CD4-positive, alpha-beta memory T cell (primary cell): ENCODE measurements at regions of chr18 and their contacts with region 1.

Region 1: GRCh38 chr18:46148810-46149209 is 44.6 kb downstream of the HAUS1 start:
- DNase-seq: peak; percentile 50 to 64 (median 55)
- H3K4me3 ChIP-seq: no peak overlapping the region
- H3K4me3 Mint-ChIP-seq: peak overlapping the region in 4 of 8 donors; percentile 5 to 53 (median 17)
- H3K27ac ChIP-seq: no peak overlapping the region
- H3K27ac Mint-ChIP-seq: peak overlapping the region in 6 of 7 donors; percentile 21 to 86 (median 68)
- H3K4me1 ChIP-seq: peaks cover 47% of the 10 kb centered on the region
- H3K4me1 Mint-ChIP-seq: peaks cover 21 to 44% (median 34%) of the 10 kb centered on the region in 4 donors
- H3K27me3 ChIP-seq: no peaks in the 10 kb centered on the region
- H3K27me3 Mint-ChIP-seq: no peaks in the 10 kb centered on the region

Region 2: DNA sequence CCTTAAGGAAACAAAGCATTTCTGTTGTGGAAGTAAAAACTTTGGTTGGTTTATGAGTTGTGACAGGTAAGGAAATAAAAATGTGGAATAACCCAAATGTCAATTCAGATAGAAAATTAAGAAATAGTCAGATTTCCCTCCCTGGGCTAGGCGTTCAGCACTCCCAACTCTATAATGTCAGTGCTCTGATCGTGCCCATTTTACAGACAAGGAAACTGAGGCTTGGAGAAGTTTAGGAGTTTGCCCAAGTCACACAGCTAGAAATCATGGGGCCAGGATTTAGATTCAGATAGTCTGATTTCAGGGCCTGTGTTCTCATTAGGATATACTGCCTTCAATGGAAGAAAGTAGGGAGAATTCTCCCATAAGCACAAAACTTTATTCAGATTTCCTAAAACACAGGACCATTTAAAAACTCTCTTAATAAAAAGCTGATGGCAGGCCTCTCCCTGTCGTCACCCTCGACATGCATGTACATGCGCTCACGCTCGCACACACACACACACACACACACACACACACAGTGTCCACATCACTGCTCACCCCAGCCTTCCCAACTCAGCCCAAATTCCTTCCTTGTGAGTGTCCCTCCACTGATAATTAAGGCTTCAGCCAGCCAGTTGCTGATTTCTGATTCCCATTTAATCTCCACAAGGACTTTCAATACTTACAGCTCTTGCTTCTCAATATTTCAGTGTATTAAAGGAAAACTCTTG is 582.6 kb before region 1 on chr18:
- CTCF ChIA-PET with region 1: no interaction called
- POLR2A ChIA-PET with region 1: no interaction called
- intact Hi-C with region 1: no loop called
- DNase-seq: no peak
- H3K4me3 ChIP-seq: no peak overlapping the region
- H3K4me3 Mint-ChIP-seq: no peak overlapping the region
- H3K27ac ChIP-seq: no peak overlapping the region
- H3K27ac Mint-ChIP-seq: no peak overlapping the region
- H3K4me1 ChIP-seq: no peaks in the 10 kb centered on the region
- H3K4me1 Mint-ChIP-seq: no peaks in the 10 kb centered on the region
- H3K27me3 ChIP-seq: no peaks in the 10 kb centered on the region
- H3K27me3 Mint-ChIP-seq: peaks cover 0 to 3% of the 10 kb centered on the region in 2 donors

Region 3: GRCh38 chr18:46097801-46098615 is 50.8 kb before region 1 on chr18 and contains the start of gene ATP5F1A:
- CTCF ChIA-PET with region 1: no interaction called
- POLR2A ChIA-PET with region 1: no interaction called
- intact Hi-C with region 1: no loop called
- DNase-seq: peak; percentile 82 to 90 (median 86)
- H3K4me3 ChIP-seq: peak within 1 kb of the TSS; percentile 39 to 95
- H3K4me3 Mint-ChIP-seq: peak within 1 kb of the TSS; percentile 92 to 99 (median 98)
- H3K27ac ChIP-seq: peak within 1 kb of the TSS; percentile 93
- H3K27ac Mint-ChIP-seq: peak within 1 kb of the TSS; percentile 94 to 99 (median 98)
- H3K4me1 ChIP-seq: peaks cover 47% of the 10 kb centered on the region
- H3K4me1 Mint-ChIP-seq: peaks cover 14 to 40% (median 25%) of the 10 kb centered on the region in 4 donors
- H3K27me3 ChIP-seq: no peaks in the 10 kb centered on the region
- H3K27me3 Mint-ChIP-seq: no peaks in the 10 kb centered on the region
- total RNA-seq, gene ATP5F1A: 212 to 225 TPM

Region 4: DNA sequence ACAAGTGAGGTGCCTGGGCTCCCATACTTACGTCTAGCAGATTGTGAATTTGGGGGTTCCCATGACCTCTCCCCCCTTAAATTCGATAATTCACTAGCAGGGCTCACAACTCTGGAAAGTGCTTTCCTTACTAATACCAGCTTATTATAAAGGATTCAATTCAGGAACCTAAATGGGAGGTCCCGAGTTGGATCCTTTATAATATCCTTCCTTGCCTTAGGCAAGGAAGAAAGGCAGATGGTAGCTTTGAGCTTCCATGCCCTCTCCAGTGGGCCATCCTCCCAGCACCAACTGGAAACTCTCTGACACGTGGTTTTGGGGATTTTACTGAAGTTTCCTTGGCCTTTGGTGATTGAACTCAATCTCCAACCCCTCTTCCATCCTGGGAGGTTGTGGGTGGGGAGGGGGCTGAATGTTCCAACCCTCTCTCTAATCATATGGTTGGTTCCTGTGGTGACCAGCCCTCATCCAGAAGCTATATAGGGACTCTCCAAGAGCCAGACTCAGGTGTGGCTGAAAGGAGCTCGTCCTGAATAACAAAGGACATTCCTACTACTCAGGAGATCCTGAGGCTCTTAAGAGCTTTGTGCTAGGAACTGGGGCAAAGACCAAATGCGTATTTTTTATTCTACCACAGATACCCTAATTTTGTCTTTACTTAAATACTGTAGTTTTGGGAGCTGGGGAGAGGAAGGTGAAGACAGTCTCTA is 17.6 kb after region 1 on chr18:
- CTCF ChIA-PET with region 1: interaction called, 68 read pairs
- POLR2A ChIA-PET with region 1: interaction called, 3 read pairs
- intact Hi-C with region 1: no loop called
- DNase-seq: no peak
- H3K4me3 ChIP-seq: no peak overlapping the region
- H3K4me3 Mint-ChIP-seq: peak overlapping the region in 1 of 8 donors; percentile 2
- H3K27ac ChIP-seq: no peak overlapping the region
- H3K27ac Mint-ChIP-seq: peak overlapping the region in 3 of 7 donors; percentile 26 to 59 (median 37)
- H3K4me1 ChIP-seq: peaks cover 6% of the 10 kb centered on the region
- H3K4me1 Mint-ChIP-seq: peaks cover 11 to 37% (median 20%) of the 10 kb centered on the region in 4 donors
- H3K27me3 ChIP-seq: no peaks in the 10 kb centered on the region
- H3K27me3 Mint-ChIP-seq: no peaks in the 10 kb centered on the region

Region 5: DNA sequence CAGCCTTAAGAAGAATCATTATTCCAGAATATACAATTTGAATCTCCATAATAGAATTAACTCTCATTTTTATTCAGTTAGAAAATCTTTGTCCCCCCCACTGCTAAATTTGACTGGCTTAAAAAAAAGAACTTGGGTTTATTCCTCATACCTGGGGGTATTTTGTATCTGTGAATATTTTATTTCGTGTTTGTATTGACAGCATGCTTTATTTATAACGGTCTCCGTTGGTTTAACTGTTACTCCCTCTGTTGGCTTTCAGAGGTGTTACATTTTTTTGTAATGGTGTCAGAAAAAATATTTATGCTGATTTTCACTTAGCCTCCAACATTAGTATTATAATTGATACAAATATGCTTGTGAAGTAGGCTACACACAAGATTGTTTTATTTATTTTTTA is 64.5 kb after region 1 on chr18:
- CTCF ChIA-PET with region 1: interaction called, 37 read pairs
- POLR2A ChIA-PET with region 1: no interaction called
- intact Hi-C with region 1: loop called (anchors 1 kb)
- DNase-seq: peak in 4 of 5 donors; percentile 35 to 54 (median 40)
- H3K4me3 ChIP-seq: no peak overlapping the region
- H3K4me3 Mint-ChIP-seq: peak overlapping the region in 6 of 8 donors; percentile 50 to 75 (median 58)
- H3K27ac ChIP-seq: no peak overlapping the region
- H3K27ac Mint-ChIP-seq: peak overlapping the region in 5 of 7 donors; percentile 37 to 81 (median 65)
- H3K4me1 ChIP-seq: peaks cover 73% of the 10 kb centered on the region
- H3K4me1 Mint-ChIP-seq: peaks cover 55 to 96% (median 80%) of the 10 kb centered on the region in 4 donors
- H3K27me3 ChIP-seq: no peaks in the 10 kb centered on the region
- H3K27me3 Mint-ChIP-seq: no peaks in the 10 kb centered on the region

Region 6: GRCh38 chr18:46220116-46220515 is 71.3 kb after region 1 on chr18:
- CTCF ChIA-PET with region 1: interaction called, 11 read pairs
- POLR2A ChIA-PET with region 1: no interaction called
- intact Hi-C with region 1: no loop called
- DNase-seq: no peak
- H3K4me3 ChIP-seq: no peak overlapping the region
- H3K4me3 Mint-ChIP-seq: no peak overlapping the region
- H3K27ac ChIP-seq: no peak overlapping the region
- H3K27ac Mint-ChIP-seq: peak overlapping the region in 2 of 7 donors; percentile 15 to 43
- H3K4me1 ChIP-seq: peaks cover 60% of the 10 kb centered on the region
- H3K4me1 Mint-ChIP-seq: peaks cover 49 to 87% (median 78%) of the 10 kb centered on the region in 4 donors
- H3K27me3 ChIP-seq: no peaks in the 10 kb centered on the region
- H3K27me3 Mint-ChIP-seq: no peaks in the 10 kb centered on the region

Region 7: DNA sequence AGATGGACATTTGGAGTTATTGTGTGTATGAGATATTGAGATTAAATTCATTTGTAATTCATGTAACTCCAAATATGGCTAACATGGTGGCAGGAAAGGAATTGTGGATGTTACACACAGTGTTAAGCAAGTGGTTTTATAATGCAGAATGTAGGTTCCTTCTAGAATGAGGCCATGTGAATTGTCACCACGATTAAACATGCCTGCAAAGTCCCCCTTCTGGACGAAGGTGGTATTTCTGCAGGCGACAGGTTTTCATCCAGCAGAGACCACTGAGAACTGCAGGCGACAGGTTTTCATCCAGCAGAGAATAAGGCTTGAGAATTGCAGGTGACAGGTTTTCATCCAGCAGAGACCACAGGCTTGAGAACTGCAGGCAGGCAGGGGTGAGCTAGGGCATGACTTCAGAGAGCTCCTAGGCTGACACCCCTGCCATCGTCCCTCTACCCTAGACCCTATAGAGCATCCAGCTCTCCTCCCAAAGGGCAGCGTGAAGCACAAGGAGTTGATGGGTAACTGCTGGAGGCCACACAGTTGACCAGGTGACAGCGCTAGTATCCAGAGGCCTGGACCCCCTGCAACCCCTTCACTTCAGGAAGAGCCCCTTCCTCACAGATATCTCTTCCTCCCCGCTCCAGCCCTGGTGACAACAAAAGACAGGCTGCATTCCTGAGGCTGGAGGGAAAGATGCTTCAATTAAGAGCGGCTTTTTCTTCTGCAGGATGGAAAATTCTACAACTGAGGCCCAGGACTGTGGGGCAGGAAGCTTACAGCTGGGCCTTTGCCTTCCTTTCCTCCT is 332.4 kb after region 1 on chr18:
- CTCF ChIA-PET with region 1: interaction called, 16 read pairs
- POLR2A ChIA-PET with region 1: no interaction called
- intact Hi-C with region 1: loop called (anchors 1 kb)
- DNase-seq: peak in 4 of 5 donors; percentile 36 to 52 (median 44)
- H3K4me3 ChIP-seq: no peak overlapping the region
- H3K4me3 Mint-ChIP-seq: no peak overlapping the region
- H3K27ac ChIP-seq: no peak overlapping the region
- H3K27ac Mint-ChIP-seq: no peak overlapping the region
- H3K4me1 ChIP-seq: no peaks in the 10 kb centered on the region
- H3K4me1 Mint-ChIP-seq: peaks cover 0 to 6% (median 2%) of the 10 kb centered on the region in 4 donors
- H3K27me3 ChIP-seq: no peaks in the 10 kb centered on the region
- H3K27me3 Mint-ChIP-seq: peaks cover 8 to 12% of the 10 kb centered on the region in 2 donors

Region 8: GRCh38 chr18:46842583-46842982 is 693.8 kb after region 1 on chr18:
- CTCF ChIA-PET with region 1: no interaction called
- POLR2A ChIA-PET with region 1: no interaction called
- intact Hi-C with region 1: no loop called
- DNase-seq: no peak
- H3K4me3 ChIP-seq: no peak overlapping the region
- H3K4me3 Mint-ChIP-seq: no peak overlapping the region
- H3K27ac ChIP-seq: no peak overlapping the region
- H3K27ac Mint-ChIP-seq: no peak overlapping the region
- H3K4me1 ChIP-seq: no peaks in the 10 kb centered on the region
- H3K4me1 Mint-ChIP-seq: no peaks in the 10 kb centered on the region
- H3K27me3 ChIP-seq: no peaks in the 10 kb centered on the region
- H3K27me3 Mint-ChIP-seq: no peaks in the 10 kb centered on the region